MCF 10A (cell line): ENCODE measurements at regions of chr1 and their contacts with region 1.

Region 1: GRCh38 chr1:46616277-46617107 is at the start of gene MOB3C:
- DNase-seq: peak; percentile 77
- H3K4me3 Mint-ChIP-seq: peak within 1 kb of the TSS; percentile 86
- H3K27ac Mint-ChIP-seq: peak within 1 kb of the TSS; percentile 88
- H3K4me1 Mint-ChIP-seq: peaks cover 30% of the 10 kb centered on the region
- H3K27me3 Mint-ChIP-seq: no peaks in the 10 kb centered on the region
- CTCF ChIP-seq: no peak
- total RNA-seq, gene MOB3C: 5.8 and 5.9 TPM in 2 replicates

Region 2: GRCh38 chr1:46094474-46095005 is 522.0 kb before region 1 on chr1:
- CTCF ChIA-PET with region 1: no interaction called
- POLR2A ChIA-PET with region 1: no interaction called
- intact Hi-C with region 1: no loop called
- DNase-seq: no peak
- H3K4me3 Mint-ChIP-seq: no peak overlapping the region
- H3K27ac Mint-ChIP-seq: no peak overlapping the region
- H3K4me1 Mint-ChIP-seq: no peaks in the 10 kb centered on the region
- H3K27me3 Mint-ChIP-seq: no peaks in the 10 kb centered on the region
- CTCF ChIP-seq: no peak

Region 3: GRCh38 chr1:46581681-46582455 is 34.6 kb before region 1 on chr1:
- CTCF ChIA-PET with region 1: no interaction called
- POLR2A ChIA-PET with region 1: no interaction called
- intact Hi-C with region 1: loop called (anchors 1 kb)
- DNase-seq: no peak
- H3K4me3 Mint-ChIP-seq: no peak overlapping the region
- H3K27ac Mint-ChIP-seq: no peak overlapping the region
- H3K4me1 Mint-ChIP-seq: no peaks in the 10 kb centered on the region
- H3K27me3 Mint-ChIP-seq: no peaks in the 10 kb centered on the region
- CTCF ChIP-seq: no peak

Region 4: GRCh38 chr1:46603858-46604549 is 12.5 kb before region 1 on chr1 and contains the start of gene MKNK1:
- CTCF ChIA-PET with region 1: interaction called, 6 read pairs
- POLR2A ChIA-PET with region 1: interaction called, 73 read pairs
- intact Hi-C with region 1: no loop called
- DNase-seq: peak; percentile 97
- H3K4me3 Mint-ChIP-seq: peak within 1 kb of the TSS; percentile 91
- H3K27ac Mint-ChIP-seq: peak within 1 kb of the TSS; percentile 80
- H3K4me1 Mint-ChIP-seq: peaks cover 17% of the 10 kb centered on the region
- H3K27me3 Mint-ChIP-seq: no peaks in the 10 kb centered on the region
- CTCF ChIP-seq: peak; percentile 7
- total RNA-seq, gene MKNK1: 25.6 and 33.7 TPM in 2 replicates

Region 5: GRCh38 chr1:46643368-46643775 is 26.9 kb after region 1 on chr1:
- CTCF ChIA-PET with region 1: interaction called, 5 read pairs
- POLR2A ChIA-PET with region 1: interaction called, 23 read pairs
- intact Hi-C with region 1: no loop called
- DNase-seq: peak; percentile 78
- H3K4me3 Mint-ChIP-seq: no peak overlapping the region
- H3K27ac Mint-ChIP-seq: no peak overlapping the region
- H3K4me1 Mint-ChIP-seq: peaks cover 23% of the 10 kb centered on the region
- H3K27me3 Mint-ChIP-seq: no peaks in the 10 kb centered on the region
- CTCF ChIP-seq: no peak

Region 6: GRCh38 chr1:46718727-46719622 is 102.5 kb after region 1 on chr1 and contains the start of gene EFCAB14:
- CTCF ChIA-PET with region 1: no interaction called
- POLR2A ChIA-PET with region 1: interaction called, 12 read pairs
- intact Hi-C with region 1: no loop called
- DNase-seq: peak; percentile 97
- H3K4me3 Mint-ChIP-seq: peak within 1 kb of the TSS; percentile 82
- H3K27ac Mint-ChIP-seq: peak within 1 kb of the TSS; percentile 90
- H3K4me1 Mint-ChIP-seq: peaks cover 25% of the 10 kb centered on the region
- H3K27me3 Mint-ChIP-seq: no peaks in the 10 kb centered on the region
- CTCF ChIP-seq: no peak
- total RNA-seq, gene EFCAB14: 33.9 and 48.1 TPM in 2 replicates